Mammary epithelial cell (primary cell): ENCODE measurements at regions of chr6 and their contacts with region 1.

Region 1: GRCh38 chr6:47097092-47097945 is 55.2 kb upstream of the ADGRF1 start:
- DNase-seq: peak; percentile 81
- H3K4me3 ChIP-seq: no peak overlapping the region
- H3K27ac ChIP-seq: no peak overlapping the region
- H3K4me1 ChIP-seq: peaks cover 54% of the 10 kb centered on the region
- H3K27me3 ChIP-seq: no peaks in the 10 kb centered on the region
- CTCF ChIP-seq: peak; percentile 80 to 82

Region 2: GRCh38 chr6:46090115-46091079 is 1006.9 kb before region 1 on chr6:
- CTCF ChIA-PET with region 1: no interaction called
- dilution Hi-C with region 1: no loop called
- in situ Hi-C with region 1: no loop called
- intact Hi-C with region 1: no loop called
- DNase-seq: peak; percentile 41
- H3K4me3 ChIP-seq: no peak overlapping the region
- H3K27ac ChIP-seq: no peak overlapping the region
- H3K4me1 ChIP-seq: no peaks in the 10 kb centered on the region
- H3K27me3 ChIP-seq: no peaks in the 10 kb centered on the region
- CTCF ChIP-seq: peak; percentile 73 to 76

Region 3: DNA sequence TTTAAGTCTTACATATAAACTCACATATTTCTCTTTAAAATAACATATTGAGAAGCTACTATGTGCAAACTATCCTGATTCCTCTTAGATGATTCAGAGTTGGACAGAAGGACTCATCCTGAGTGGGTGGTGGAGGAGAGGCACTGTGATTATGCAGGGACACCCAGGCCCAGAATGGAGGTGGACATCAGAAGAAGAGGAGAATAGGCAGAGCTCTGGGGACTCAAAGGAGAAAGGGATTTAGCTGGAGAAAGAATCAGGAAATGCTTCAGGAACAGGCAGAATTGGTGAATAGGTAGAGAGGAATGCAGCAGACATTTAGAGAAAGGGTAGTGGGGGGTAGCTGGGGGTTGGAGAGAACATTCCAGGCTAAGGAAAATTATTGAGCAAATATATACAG is 623.4 kb before region 1 on chr6:
- CTCF ChIA-PET with region 1: no interaction called
- dilution Hi-C with region 1: no loop called
- in situ Hi-C with region 1: no loop called
- intact Hi-C with region 1: no loop called
- DNase-seq: peak; percentile 2
- H3K4me3 ChIP-seq: no peak overlapping the region
- H3K27ac ChIP-seq: no peak overlapping the region
- H3K4me1 ChIP-seq: no peaks in the 10 kb centered on the region
- H3K27me3 ChIP-seq: no peaks in the 10 kb centered on the region
- CTCF ChIP-seq: no peak

Region 4: GRCh38 chr6:46848684-46849360 is 248.5 kb before region 1 on chr6:
- CTCF ChIA-PET with region 1: no interaction called
- dilution Hi-C with region 1: no loop called
- in situ Hi-C with region 1: no loop called
- intact Hi-C with region 1: loop called (anchors 2 kb)
- DNase-seq: peak; percentile 73
- H3K4me3 ChIP-seq: no peak overlapping the region
- H3K27ac ChIP-seq: no peak overlapping the region
- H3K4me1 ChIP-seq: peaks cover 15% of the 10 kb centered on the region
- H3K27me3 ChIP-seq: no peaks in the 10 kb centered on the region
- CTCF ChIP-seq: peak; percentile 69 to 96

Region 5: DNA sequence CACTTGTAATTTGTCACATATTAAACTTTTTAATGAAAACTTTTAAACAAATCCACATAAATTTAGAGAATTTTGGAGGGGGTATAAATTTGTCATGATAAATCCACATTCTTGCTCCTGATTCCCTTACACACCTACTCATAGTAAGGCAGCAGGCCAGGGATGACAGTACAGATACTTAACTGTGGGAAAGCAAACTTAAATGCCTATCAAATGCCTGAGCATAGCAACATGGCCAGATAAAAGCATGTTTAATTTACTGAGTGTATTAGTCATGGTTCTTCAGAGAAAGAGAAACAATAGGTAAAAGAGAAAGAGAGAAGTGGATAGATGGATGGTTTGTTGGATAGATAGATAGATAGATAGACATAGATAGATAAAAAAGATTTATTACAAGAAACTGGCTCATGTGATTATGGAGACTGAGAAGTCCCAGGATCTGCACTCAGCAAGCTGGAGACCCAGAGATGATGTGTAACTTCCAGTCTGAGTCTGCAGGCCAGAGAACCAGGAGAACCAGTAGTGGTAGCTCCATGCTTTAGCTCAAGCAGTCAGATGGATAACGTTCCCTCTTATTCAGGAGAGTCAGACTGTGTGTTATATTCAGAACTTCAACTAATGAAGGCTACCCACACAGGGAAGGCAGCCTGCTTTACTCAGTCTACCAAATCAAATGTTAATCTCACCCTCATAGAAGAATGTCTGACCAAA is 39.3 kb before region 1 on chr6:
- CTCF ChIA-PET with region 1: no interaction called
- dilution Hi-C with region 1: no loop called
- in situ Hi-C with region 1: no loop called
- intact Hi-C with region 1: loop called (anchors 2 kb)
- DNase-seq: peak; percentile 93
- H3K4me3 ChIP-seq: no peak overlapping the region
- H3K27ac ChIP-seq: peak overlapping the region; percentile 76
- H3K4me1 ChIP-seq: peaks cover 47% of the 10 kb centered on the region
- H3K27me3 ChIP-seq: no peaks in the 10 kb centered on the region
- CTCF ChIP-seq: no peak

Region 6: DNA sequence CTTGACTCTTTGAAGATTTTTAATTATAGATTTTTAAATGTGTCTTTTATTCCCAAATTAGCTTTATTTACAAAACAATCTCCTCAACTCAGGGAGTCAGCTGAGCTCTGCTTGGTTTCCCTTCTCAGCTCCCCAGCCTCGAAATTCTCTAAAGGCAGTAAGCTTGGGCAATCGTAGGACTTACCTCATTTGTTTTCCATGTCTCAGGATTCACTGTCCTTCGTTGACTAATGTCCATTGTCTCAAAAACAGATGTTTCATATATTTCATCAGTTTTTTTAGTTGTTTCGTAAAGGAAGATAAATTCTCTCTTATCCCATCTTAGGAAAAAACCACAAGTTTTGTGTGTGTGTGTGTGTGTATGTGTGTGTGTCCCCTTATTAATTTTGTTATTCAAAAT is 47.0 kb after region 1 on chr6:
- CTCF ChIA-PET with region 1: no interaction called
- dilution Hi-C with region 1: loop called (anchors 5 kb)
- in situ Hi-C with region 1: no loop called
- intact Hi-C with region 1: no loop called
- DNase-seq: no peak
- H3K4me3 ChIP-seq: no peak overlapping the region
- H3K27ac ChIP-seq: no peak overlapping the region
- H3K4me1 ChIP-seq: peaks cover 17% of the 10 kb centered on the region
- H3K27me3 ChIP-seq: no peaks in the 10 kb centered on the region
- CTCF ChIP-seq: no peak

Region 7: GRCh38 chr6:47188588-47189021 is 91.3 kb after region 1 on chr6:
- CTCF ChIA-PET with region 1: no interaction called
- dilution Hi-C with region 1: no loop called
- in situ Hi-C with region 1: loop called in 1 of 2 experiments (anchors 10 kb)
- intact Hi-C with region 1: loop called (anchors 5 kb)
- DNase-seq: peak; percentile 99
- H3K4me3 ChIP-seq: no peak overlapping the region
- H3K27ac ChIP-seq: peak overlapping the region; percentile 64
- H3K4me1 ChIP-seq: peaks cover 29% of the 10 kb centered on the region
- H3K27me3 ChIP-seq: no peaks in the 10 kb centered on the region
- CTCF ChIP-seq: peak in 1 of 2 donors; percentile 11

Region 8: GRCh38 chr6:47242483-47243386 is 145.4 kb after region 1 on chr6:
- CTCF ChIA-PET with region 1: no interaction called
- dilution Hi-C with region 1: no loop called
- in situ Hi-C with region 1: no loop called
- intact Hi-C with region 1: loop called (anchors 5 kb)
- DNase-seq: peak; percentile 93
- H3K4me3 ChIP-seq: no peak overlapping the region
- H3K27ac ChIP-seq: peak overlapping the region; percentile 62
- H3K4me1 ChIP-seq: peaks cover 20% of the 10 kb centered on the region
- H3K27me3 ChIP-seq: no peaks in the 10 kb centered on the region
- CTCF ChIP-seq: no peak

Region 9: GRCh38 chr6:47309291-47310130 is 212.2 kb after region 1 on chr6 and contains the start of gene TNFRSF21:
- CTCF ChIA-PET with region 1: interaction called, 4 read pairs
- dilution Hi-C with region 1: no loop called
- in situ Hi-C with region 1: loop called (anchors 5 kb)
- intact Hi-C with region 1: loop called (anchors 1 kb)
- DNase-seq: peak; percentile 92
- H3K4me3 ChIP-seq: peak within 1 kb of the TSS; percentile 61 to 90 (median 85)
- H3K27ac ChIP-seq: peak within 1 kb of the TSS; percentile 60
- H3K4me1 ChIP-seq: peaks cover 21% of the 10 kb centered on the region
- H3K27me3 ChIP-seq: no peaks in the 10 kb centered on the region
- CTCF ChIP-seq: peak; percentile 80 to 98
- total RNA-seq, gene TNFRSF21: 70.3 to 188 TPM